Vagina (tissue), 2 donors: ENCODE measurements at regions of chr12 and their contacts with region 1.

Region 1: DNA sequence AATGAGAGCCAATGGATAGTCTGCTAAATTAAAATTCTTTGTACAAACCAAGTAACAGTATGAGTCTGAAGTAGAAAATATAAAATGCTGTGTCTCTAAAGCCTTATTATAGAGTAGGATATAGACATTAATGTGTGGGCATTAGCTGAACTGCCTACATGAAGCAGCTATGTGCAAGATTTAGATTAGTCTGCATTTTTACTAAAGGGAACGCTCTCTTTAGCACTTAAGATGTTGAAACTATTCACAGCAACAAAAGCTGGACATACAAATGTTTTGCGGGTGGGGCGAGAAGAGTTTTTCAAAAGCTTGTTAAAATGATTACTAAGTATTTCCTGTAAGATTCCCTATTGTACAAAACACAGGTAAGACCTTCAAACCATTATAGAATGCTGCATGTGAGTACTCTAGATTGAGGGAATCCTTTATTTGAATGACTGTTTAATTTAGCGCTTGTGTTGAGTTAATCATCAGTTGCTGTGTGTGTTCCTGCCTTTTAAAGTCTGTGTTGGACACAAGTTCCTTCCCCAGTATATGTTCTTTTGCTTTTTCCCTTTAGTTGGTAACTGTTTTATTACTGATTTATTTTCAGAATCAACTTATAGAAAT is 87.1 kb downstream of the RAD52 start:
- DNase-seq: no peak
- H3K4me3 ChIP-seq: peak overlapping the region in 1 of 2 donors; percentile 7
- H3K27ac ChIP-seq: no peak overlapping the region
- H3K4me1 ChIP-seq: peaks cover 22% of the 10 kb centered on the region
- H3K27me3 ChIP-seq: no peaks in the 10 kb centered on the region
- CTCF ChIP-seq: no peak
- POLR2A ChIP-seq: no peak

Region 2: DNA sequence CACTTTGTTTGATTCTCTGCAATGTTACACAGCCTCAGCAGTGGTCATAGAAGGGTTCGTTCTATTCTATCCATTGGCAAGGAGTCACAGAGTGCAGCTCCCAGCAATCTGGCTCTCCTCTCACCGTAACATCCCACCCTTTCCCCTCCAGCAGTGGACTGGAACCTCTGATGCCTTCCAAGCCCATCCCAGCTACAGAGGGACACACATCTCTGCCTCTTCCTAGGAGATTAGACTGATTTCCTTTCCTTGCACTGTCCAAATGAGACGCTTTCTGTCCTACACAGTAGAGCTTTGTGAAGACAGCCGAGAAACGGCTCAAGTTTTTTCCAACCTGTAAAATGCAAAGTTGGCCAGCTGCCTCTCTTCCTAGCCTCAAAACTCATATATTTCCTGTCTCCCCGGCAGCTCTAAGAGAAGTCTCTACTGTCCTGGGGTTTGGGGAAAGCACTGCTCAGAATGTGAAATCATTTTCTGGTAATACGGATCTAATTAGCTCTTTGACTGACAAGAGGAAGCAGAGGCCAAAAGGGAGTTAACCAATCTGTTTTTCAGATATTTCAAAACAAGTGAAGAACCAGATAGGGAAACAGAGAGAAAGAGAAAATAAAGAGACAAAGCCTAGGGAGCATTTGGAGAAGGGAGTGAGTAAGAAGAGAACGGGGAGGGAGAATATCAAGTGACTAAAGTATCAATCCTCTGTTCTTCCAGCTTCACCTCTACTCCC is 199.7 kb before region 1 on chr12:
- intact Hi-C with region 1: loop called (anchors 5 kb)
- DNase-seq: no peak
- H3K4me3 ChIP-seq: peak overlapping the region; percentile 34 to 36
- H3K27ac ChIP-seq: peak overlapping the region; percentile 56
- H3K4me1 ChIP-seq: peaks cover 20% of the 10 kb centered on the region
- H3K27me3 ChIP-seq: no peaks in the 10 kb centered on the region
- CTCF ChIP-seq: no peak
- POLR2A ChIP-seq: no peak

Region 3: GRCh38 chr12:1099158-1099557 is 236.8 kb after region 1 on chr12:
- intact Hi-C with region 1: no loop called
- DNase-seq: no peak
- H3K4me3 ChIP-seq: no peak overlapping the region
- H3K27ac ChIP-seq: no peak overlapping the region
- H3K4me1 ChIP-seq: no peaks in the 10 kb centered on the region
- H3K27me3 ChIP-seq: no peaks in the 10 kb centered on the region
- CTCF ChIP-seq: no peak
- POLR2A ChIP-seq: no peak

Region 4: DNA sequence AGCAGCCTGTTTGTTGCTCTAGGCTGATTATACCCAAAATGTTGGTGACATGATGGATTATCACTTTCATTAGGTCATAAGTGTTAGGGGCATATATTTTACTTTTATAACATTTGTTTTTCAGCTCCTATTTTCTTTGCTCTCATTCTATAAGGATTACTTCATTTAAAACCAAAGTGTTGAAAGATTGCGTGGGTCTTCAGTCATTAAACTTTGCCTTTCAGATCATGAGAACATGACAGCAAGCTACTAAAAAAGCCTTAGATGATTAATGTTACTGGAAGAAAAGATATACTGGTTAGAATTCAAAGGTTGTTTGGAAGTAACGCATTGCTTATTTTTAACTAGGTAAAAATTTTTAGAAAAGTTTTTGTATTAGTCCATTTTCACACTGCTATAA is 285.4 kb after region 1 on chr12:
- intact Hi-C with region 1: no loop called
- DNase-seq: no peak
- H3K4me3 ChIP-seq: no peak overlapping the region
- H3K27ac ChIP-seq: no peak overlapping the region
- H3K4me1 ChIP-seq: no peaks in the 10 kb centered on the region
- H3K27me3 ChIP-seq: no peaks in the 10 kb centered on the region
- CTCF ChIP-seq: no peak
- POLR2A ChIP-seq: no peak